ENCODE measurements at regions of chr4 and their contacts with region 1.

Region 1: GRCh38 chr4:74531963-74532794 is 87.2 kb downstream of the AREG start:
- DNase-seq: no peak
- ATAC-seq: peak; percentile 54

Region 2: GRCh38 chr4:74444891-74445642 is 87.1 kb before region 1 on chr4 and contains the start of gene AREG:
- intact Hi-C with region 1: loop called (anchors 2 kb)
- DNase-seq: peak; percentile 92
- ATAC-seq: peak; percentile 87
- total RNA-seq, gene AREG: 1.4 TPM